ENCODE measurements at regions of chr7 and their contacts with region 1.

Region 1: DNA sequence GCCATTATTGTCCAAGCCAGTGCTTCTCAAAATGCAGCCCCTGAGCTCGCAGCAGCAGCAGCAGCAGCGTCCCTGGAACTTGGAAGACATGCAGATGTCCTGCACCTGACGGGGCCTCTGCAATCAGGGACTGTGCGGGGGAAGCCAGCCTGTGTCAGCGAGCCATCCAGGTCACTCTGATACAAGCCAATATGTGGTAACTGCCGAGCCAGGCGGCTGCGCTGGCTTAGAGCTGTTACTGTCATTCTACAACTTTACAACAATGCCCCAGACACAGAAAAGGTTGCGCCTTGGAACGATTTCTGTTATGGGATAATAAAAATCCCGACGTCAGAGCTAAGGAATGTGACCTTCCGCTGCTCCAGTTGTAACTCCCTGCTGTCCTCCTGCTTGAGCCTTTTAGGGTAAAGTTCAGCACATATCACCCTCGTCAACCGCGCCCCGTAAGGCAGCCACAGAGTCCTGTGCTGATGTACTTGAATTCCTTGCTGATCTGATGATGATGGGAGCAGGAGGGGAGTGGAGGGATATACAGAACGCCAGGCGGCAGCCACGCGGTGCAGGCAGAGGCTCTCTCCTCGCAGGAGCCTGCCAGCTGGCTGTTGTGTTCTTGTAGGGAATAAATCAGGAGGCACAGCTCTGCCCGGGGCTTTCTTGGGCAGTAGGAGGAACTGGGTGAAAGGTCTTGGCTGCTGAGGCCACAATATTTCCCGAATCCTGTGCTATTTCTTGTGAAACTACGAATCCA is 20.0 kb upstream of the CRYGN start:
- DNase-seq: peak; percentile 90 to 97
- H3K4me3 ChIP-seq: peak overlapping the region; percentile 25
- H3K4me3 Mint-ChIP-seq: peak overlapping the region; percentile 78
- H3K27ac Mint-ChIP-seq: peak overlapping the region; percentile 96
- H3K4me1 ChIP-seq: peaks cover 24% of the 10 kb centered on the region
- H3K4me1 Mint-ChIP-seq: peaks cover 19% of the 10 kb centered on the region
- H3K27me3 ChIP-seq: no peaks in the 10 kb centered on the region
- H3K27me3 Mint-ChIP-seq: no peaks in the 10 kb centered on the region
- CTCF ChIP-seq: peak in 1 of 2 experiments; percentile 60

Region 2: DNA sequence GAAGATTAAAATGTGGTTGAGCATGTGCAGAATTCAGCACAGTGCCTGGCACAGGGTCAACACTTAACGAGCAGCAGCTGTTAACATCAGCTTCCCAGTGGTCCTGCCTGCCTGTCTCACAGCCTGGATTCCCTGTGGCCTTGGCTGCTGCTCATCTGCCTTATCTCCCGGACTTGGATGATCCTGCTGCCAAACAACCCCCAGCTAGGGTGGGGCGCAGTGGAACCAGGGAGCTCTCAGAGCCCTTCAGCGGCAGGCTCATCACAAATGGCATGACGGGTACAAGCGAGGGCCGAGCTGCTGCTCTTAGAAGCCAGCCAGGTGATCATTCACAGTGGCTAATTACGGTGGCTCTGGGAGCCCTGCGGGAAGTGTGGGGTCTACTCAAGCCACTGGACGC is 198.4 kb before region 1 on chr7:
- CTCF ChIA-PET with region 1: no interaction called
- POLR2A ChIA-PET with region 1: no interaction called
- intact Hi-C with region 1: no loop called
- DNase-seq: no peak
- H3K4me3 ChIP-seq: no peak overlapping the region
- H3K4me3 Mint-ChIP-seq: no peak overlapping the region
- H3K27ac Mint-ChIP-seq: no peak overlapping the region
- H3K4me1 ChIP-seq: no peaks in the 10 kb centered on the region
- H3K4me1 Mint-ChIP-seq: no peaks in the 10 kb centered on the region
- H3K27me3 ChIP-seq: no peaks in the 10 kb centered on the region
- H3K27me3 Mint-ChIP-seq: peaks cover 30% of the 10 kb centered on the region
- CTCF ChIP-seq: no peak

Region 3: DNA sequence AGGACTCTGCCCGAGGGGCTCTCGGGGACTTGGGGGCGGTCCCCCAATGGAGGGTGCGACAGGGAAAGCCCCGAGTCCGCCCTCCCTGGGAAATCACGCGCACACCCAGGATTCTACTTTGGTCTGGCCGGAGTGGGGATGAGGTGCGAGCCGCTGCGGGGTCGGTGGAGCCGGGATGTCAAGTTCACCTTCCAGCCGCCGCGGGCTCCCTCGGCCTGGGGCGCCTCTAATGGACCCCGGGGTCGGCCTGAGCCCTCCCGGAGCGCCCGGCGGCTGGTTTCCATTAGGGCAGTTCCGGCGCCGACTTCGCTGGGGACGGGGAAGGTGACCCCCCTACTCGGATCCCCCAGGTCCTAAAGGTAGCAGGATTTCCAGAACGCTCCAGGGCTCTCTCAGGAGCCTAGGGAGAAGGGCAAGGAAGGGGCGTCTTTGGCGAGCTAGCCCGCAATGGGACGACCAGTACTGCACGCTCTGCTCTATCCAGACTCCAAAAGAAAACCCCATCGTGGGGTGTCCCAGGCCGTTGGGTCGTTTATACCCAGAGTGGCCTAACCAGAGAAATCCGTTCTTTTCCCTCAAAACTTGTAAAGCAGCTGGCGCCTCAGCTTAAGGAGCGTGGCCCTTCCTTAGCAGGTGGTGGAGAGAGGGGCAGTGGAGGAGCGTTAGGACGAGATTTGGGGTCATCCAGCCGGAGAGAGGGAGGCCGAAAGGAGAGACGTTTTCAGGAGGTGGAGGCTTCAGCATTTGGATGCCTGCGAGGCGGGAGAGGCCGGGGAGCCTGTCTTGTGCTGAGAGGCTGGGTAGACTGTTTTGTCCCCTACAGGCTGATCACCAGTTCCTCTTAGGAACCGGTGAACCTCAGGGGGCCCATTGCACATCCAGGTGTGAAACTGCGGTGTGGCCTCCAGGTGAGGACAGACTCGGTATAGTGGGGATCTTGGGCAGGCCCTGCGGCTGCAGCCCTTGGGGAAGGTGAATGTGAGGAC is 49.2 kb before region 1 on chr7:
- CTCF ChIA-PET with region 1: no interaction called
- POLR2A ChIA-PET with region 1: no interaction called
- intact Hi-C with region 1: loop called (anchors 2 kb)
- DNase-seq: peak in 1 of 2 experiments; percentile 29
- H3K4me3 ChIP-seq: peak overlapping the region; percentile 54
- H3K4me3 Mint-ChIP-seq: peak overlapping the region; percentile 60
- H3K27ac Mint-ChIP-seq: no peak overlapping the region
- H3K4me1 ChIP-seq: no peaks in the 10 kb centered on the region
- H3K4me1 Mint-ChIP-seq: no peaks in the 10 kb centered on the region
- H3K27me3 ChIP-seq: no peaks in the 10 kb centered on the region
- H3K27me3 Mint-ChIP-seq: peaks cover 3% of the 10 kb centered on the region
- CTCF ChIP-seq: no peak

Region 4: DNA sequence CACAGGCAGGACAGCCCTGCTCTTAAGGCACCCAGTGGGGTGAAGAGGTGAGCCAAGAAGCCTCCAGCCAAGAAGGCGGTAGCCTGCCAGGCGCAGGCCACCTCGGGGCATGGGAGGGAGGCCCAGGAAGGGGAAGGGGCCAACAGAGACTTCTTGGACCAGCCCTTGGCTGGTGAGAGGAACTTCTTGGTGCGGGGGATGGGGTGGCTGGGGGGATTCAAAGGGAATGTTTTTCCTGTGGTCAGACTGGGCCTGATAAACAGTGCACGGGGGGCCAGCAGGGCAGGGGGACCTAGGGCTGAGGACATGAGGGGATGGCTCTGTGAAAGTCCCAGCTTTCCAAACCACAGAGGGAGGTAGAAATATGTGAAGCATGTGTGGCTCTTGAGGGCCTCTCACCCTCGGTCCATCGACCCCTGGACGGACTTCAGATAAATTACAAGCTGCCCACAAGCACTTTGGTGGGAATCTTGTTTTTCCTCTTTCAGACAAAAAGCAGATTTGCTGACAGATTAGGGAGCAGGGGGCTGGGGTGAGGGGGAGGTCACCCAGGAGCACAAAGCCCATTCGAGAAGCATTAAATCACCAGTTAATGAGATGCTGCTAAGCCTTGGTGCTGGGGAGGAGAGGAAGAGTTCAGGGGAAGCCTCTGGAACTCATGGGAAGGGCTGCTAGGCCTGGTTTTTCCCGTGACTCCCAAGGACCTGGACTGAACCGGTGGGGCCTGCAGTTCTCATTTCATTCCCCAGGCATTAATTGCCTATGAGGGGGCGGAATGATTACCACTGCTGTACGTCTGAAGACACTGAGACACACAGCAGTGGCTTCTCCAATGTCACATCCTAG is 31.3 kb before region 1 on chr7:
- CTCF ChIA-PET with region 1: interaction called, 3 read pairs
- POLR2A ChIA-PET with region 1: interaction called, 3 read pairs
- intact Hi-C with region 1: loop called (anchors 1 kb)
- DNase-seq: peak; percentile 71 to 86
- H3K4me3 ChIP-seq: no peak overlapping the region
- H3K4me3 Mint-ChIP-seq: peak overlapping the region; percentile 39
- H3K27ac Mint-ChIP-seq: peak overlapping the region; percentile 94
- H3K4me1 ChIP-seq: peaks cover 33% of the 10 kb centered on the region
- H3K4me1 Mint-ChIP-seq: peaks cover 25% of the 10 kb centered on the region
- H3K27me3 ChIP-seq: no peaks in the 10 kb centered on the region
- H3K27me3 Mint-ChIP-seq: no peaks in the 10 kb centered on the region
- CTCF ChIP-seq: no peak

Region 5: GRCh38 chr7:151491859-151492258 is 32.0 kb after region 1 on chr7:
- CTCF ChIA-PET with region 1: no interaction called
- POLR2A ChIA-PET with region 1: interaction called, 3 read pairs
- intact Hi-C with region 1: loop called (anchors 2 kb)
- DNase-seq: peak; percentile 50 to 53
- H3K4me3 ChIP-seq: no peak overlapping the region
- H3K4me3 Mint-ChIP-seq: no peak overlapping the region
- H3K27ac Mint-ChIP-seq: peak overlapping the region; percentile 76
- H3K4me1 ChIP-seq: peaks cover 33% of the 10 kb centered on the region
- H3K4me1 Mint-ChIP-seq: peaks cover 34% of the 10 kb centered on the region
- H3K27me3 ChIP-seq: no peaks in the 10 kb centered on the region
- H3K27me3 Mint-ChIP-seq: no peaks in the 10 kb centered on the region
- CTCF ChIP-seq: no peak

Measured in Caco-2 (cell line).